Naive thymus-derived CD4-positive, alpha-beta T cell (primary cell): ENCODE measurements at regions of chr22 and their contacts with region 1.

Region 1: DNA sequence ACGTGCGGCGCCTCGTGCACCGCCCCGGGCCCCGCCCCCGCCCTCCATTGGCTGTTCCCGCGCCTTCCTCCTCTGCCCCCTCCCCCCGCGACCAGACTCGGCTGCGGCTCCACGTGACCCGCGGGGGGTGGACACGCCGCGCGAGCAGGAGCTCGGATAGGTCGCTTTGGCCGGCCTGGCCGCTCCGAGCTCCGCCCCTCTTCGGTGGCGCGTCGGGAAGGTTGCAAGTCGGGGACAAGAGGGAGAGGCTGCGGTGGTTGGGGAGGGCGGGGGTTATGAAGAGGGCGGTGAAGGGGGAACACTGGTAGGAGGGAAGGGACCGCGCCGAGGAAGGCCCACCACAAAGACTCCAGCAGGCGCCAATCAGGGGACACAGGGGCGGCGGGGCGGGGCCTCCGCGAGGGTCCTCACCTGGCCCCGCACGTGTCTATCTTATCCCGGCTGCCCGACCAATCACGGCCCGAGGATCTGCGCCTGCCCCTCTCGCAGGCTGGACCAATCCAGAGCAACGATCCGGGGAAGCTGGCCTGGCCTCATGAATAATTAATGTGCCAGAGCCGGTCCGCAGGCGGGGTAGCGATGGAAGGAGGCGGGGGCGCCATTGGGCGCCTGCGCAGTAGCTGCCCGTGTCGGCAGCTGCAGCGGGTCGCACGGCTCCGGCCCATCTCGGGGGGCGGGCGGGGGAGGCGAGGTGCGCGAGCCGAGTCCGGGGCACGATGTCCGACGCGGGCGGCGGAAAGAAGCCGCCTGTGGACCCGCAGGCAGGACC is at the start of gene TEF:
- DNase-seq: peak; percentile 97 to 99 (median 98)
- ATAC-seq: peak; percentile 89
- H3K4me3 ChIP-seq: peak within 1 kb of the TSS; percentile 86
- H3K4me3 Mint-ChIP-seq: peak within 1 kb of the TSS; percentile 90 to 97 (median 94)
- H3K27ac ChIP-seq: peak within 1 kb of the TSS; percentile 95
- H3K27ac Mint-ChIP-seq: peak within 1 kb of the TSS; percentile 94 to 99 (median 98)
- H3K4me1 ChIP-seq: peaks cover 5 to 14% of the 10 kb centered on the region in 2 donors
- H3K4me1 Mint-ChIP-seq: peaks cover 5 to 29% (median 19%) of the 10 kb centered on the region in 7 donors
- H3K27me3 ChIP-seq: no peaks in the 10 kb centered on the region
- H3K27me3 Mint-ChIP-seq: peaks cover 0 to 5% (median 0%) of the 10 kb centered on the region in 5 donors
- total RNA-seq, gene TEF: 3.8 to 8.4 (median 6.2) TPM

Region 2: DNA sequence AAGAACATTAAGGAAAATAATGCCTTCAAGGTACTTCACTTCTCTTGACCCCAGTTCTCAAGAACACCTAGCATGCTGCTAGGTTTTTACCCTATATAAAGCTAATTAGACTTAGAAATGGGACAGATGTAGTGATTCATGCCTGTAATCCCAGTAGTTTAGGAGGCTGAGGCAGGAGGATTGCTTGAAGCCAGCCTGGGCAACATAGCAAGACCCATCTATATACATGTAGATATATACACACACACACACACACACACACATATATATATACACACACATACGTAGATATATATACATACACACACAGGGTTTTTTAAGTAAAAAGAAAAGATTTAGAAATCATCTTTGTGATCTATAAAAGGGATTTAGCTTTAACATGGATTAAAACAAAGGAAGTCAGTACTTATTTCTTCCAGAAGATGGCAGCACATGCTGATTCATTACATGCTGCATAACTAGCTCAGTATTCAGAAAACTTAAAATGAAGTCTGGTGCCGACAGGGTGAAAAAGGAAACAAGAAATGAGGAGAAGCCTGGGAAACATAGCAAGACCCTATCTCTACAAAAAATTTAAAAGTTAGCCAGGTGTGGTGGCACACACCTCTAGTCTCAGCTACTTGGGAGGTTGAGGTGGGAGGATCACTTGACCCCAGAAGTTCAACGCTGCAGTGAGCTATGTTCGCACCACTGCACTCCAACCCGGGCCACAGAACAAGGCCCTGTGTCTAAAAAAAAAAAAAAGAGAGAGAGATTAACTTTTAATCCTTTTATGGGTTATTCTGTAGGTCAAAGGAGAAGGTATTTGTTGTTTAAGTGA is 458.8 kb before region 1 on chr22:
- CTCF ChIA-PET with region 1: no interaction called
- POLR2A ChIA-PET with region 1: no interaction called
- intact Hi-C with region 1: no loop called
- DNase-seq: peak in 7 of 9 donors; percentile 51 to 73 (median 67)
- ATAC-seq: peak; percentile 92
- H3K4me3 ChIP-seq: no peak overlapping the region
- H3K4me3 Mint-ChIP-seq: peak overlapping the region in 9 of 10 donors; percentile 1 to 79 (median 37)
- H3K27ac ChIP-seq: peak overlapping the region; percentile 2
- H3K27ac Mint-ChIP-seq: peak overlapping the region in 7 of 9 donors; percentile 47 to 88 (median 68)
- H3K4me1 ChIP-seq: peaks cover 0 to 4% of the 10 kb centered on the region in 2 donors
- H3K4me1 Mint-ChIP-seq: peaks cover 3 to 10% (median 5%) of the 10 kb centered on the region in 7 donors
- H3K27me3 ChIP-seq: no peaks in the 10 kb centered on the region
- H3K27me3 Mint-ChIP-seq: no peaks in the 10 kb centered on the region

Region 3: GRCh38 chr22:41204992-41205900 is 176.3 kb before region 1 on chr22 and contains the start of gene L3MBTL2:
- CTCF ChIA-PET with region 1: no interaction called
- POLR2A ChIA-PET with region 1: no interaction called
- intact Hi-C with region 1: loop called (anchors 1 kb)
- DNase-seq: peak; percentile 89 to 99 (median 97)
- ATAC-seq: peak; percentile 100
- H3K4me3 ChIP-seq: peak within 1 kb of the TSS; percentile 94
- H3K4me3 Mint-ChIP-seq: peak within 1 kb of the TSS; percentile 87 to 100 (median 96)
- H3K27ac ChIP-seq: peak within 1 kb of the TSS; percentile 85
- H3K27ac Mint-ChIP-seq: peak within 1 kb of the TSS; percentile 88 to 98 (median 92)
- H3K4me1 ChIP-seq: peaks cover 4 to 10% of the 10 kb centered on the region in 2 donors
- H3K4me1 Mint-ChIP-seq: peaks cover 10 to 40% (median 36%) of the 10 kb centered on the region in 7 donors
- H3K27me3 ChIP-seq: no peaks in the 10 kb centered on the region
- H3K27me3 Mint-ChIP-seq: peaks cover 0 to 26% (median 0%) of the 10 kb centered on the region in 5 donors
- total RNA-seq, gene L3MBTL2: 31.6 to 45.9 (median 43.3) TPM

Region 4: GRCh38 chr22:41403532-41404318 is 22.2 kb after region 1 on chr22:
- CTCF ChIA-PET with region 1: interaction called, 15 read pairs
- POLR2A ChIA-PET with region 1: interaction called, 6 read pairs
- intact Hi-C with region 1: loop called in 1 of 2 experiments (anchors 2 kb)
- DNase-seq: peak; percentile 60 to 83 (median 79)
- ATAC-seq: peak; percentile 100
- H3K4me3 ChIP-seq: no peak overlapping the region
- H3K4me3 Mint-ChIP-seq: peak overlapping the region in 2 of 10 donors; percentile 4 to 65
- H3K27ac ChIP-seq: peak overlapping the region; percentile 26
- H3K27ac Mint-ChIP-seq: peak overlapping the region in 5 of 9 donors; percentile 3 to 76 (median 6)
- H3K4me1 ChIP-seq: peaks cover 0 to 7% of the 10 kb centered on the region in 2 donors
- H3K4me1 Mint-ChIP-seq: peaks cover 2 to 11% (median 4%) of the 10 kb centered on the region in 7 donors
- H3K27me3 ChIP-seq: no peaks in the 10 kb centered on the region
- H3K27me3 Mint-ChIP-seq: no peaks in the 10 kb centered on the region

Region 5: GRCh38 chr22:41526837-41527799 is 145.6 kb after region 1 on chr22:
- CTCF ChIA-PET with region 1: no interaction called
- POLR2A ChIA-PET with region 1: interaction called, 5 read pairs
- intact Hi-C with region 1: loop called in 1 of 2 experiments (anchors 1 kb)
- DNase-seq: peak; percentile 36 to 75 (median 64)
- ATAC-seq: peak; percentile 78
- H3K4me3 ChIP-seq: no peak overlapping the region
- H3K4me3 Mint-ChIP-seq: no peak overlapping the region
- H3K27ac ChIP-seq: peak overlapping the region; percentile 48
- H3K27ac Mint-ChIP-seq: peak overlapping the region in 7 of 9 donors; percentile 40 to 84 (median 77)
- H3K4me1 ChIP-seq: peaks cover 10 to 16% of the 10 kb centered on the region in 2 donors
- H3K4me1 Mint-ChIP-seq: peaks cover 0 to 25% (median 20%) of the 10 kb centered on the region in 7 donors
- H3K27me3 ChIP-seq: no peaks in the 10 kb centered on the region
- H3K27me3 Mint-ChIP-seq: no peaks in the 10 kb centered on the region

Region 6: DNA sequence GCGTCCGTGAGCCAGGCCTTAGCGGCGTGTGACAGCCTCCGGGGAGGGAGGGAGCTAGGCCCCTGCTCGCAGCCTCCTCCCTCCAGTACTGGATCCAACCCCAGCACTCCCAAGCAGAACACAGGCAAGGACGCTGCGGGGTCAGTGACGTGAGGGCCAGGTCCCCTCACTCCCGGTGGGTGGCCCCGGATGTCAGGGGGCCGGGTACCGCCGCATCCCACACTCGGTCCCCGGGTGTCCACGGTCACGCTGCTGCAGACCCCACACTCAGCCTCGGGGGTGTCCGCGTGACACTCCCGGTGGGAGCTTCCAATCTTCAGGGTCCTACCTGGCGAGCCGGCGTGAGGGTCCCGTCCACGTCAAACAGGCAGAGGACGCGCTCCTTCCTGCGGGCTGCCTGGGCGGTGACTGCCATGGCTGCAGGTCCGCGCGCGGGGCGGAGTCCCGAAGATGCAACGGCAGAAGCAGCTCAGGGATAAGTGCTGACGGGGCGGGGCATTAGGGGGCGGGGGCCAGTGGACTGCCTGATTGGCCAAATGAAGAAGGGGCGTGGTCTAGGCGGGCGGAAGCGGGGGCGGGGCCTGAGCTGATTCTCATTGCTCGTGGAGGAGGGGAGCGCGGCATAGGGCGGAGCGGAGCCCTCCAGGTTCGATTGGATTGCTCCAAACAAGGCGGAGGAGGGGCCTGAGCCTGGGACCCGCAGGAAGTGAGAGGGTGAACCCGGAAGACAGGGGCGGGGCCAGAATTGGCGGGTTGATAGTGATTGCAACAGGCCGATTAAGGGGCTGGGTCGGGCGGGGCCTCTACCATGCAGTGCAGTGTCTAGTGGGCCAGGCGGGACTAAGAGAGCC is 208.1 kb after region 1 on chr22 and contains the start of gene PMM1:
- CTCF ChIA-PET with region 1: no interaction called
- POLR2A ChIA-PET with region 1: interaction called, 5 read pairs
- intact Hi-C with region 1: loop called (anchors 1 kb)
- DNase-seq: peak; percentile 97 to 100 (median 100)
- ATAC-seq: peak; percentile 99
- H3K4me3 ChIP-seq: peak within 1 kb of the TSS; percentile 97
- H3K4me3 Mint-ChIP-seq: peak within 1 kb of the TSS; percentile 76 to 96 (median 93)
- H3K27ac ChIP-seq: peak within 1 kb of the TSS; percentile 79
- H3K27ac Mint-ChIP-seq: peak within 1 kb of the TSS; percentile 81 to 93 (median 86)
- H3K4me1 ChIP-seq: peaks cover 9 to 11% of the 10 kb centered on the region in 2 donors
- H3K4me1 Mint-ChIP-seq: peaks cover 5 to 28% (median 22%) of the 10 kb centered on the region in 7 donors
- H3K27me3 ChIP-seq: no peaks in the 10 kb centered on the region
- H3K27me3 Mint-ChIP-seq: no peaks in the 10 kb centered on the region
- total RNA-seq, gene PMM1: 22.5 to 34.3 (median 26.9) TPM

Region 7: GRCh38 chr22:43014869-43015676 is 1633.6 kb after region 1 on chr22 and contains the start of gene PACSIN2:
- CTCF ChIA-PET with region 1: no interaction called
- POLR2A ChIA-PET with region 1: no interaction called
- intact Hi-C with region 1: loop called in 1 of 2 experiments (anchors 10 kb)
- DNase-seq: peak; percentile 95 to 99 (median 97)
- ATAC-seq: peak; percentile 99
- H3K4me3 ChIP-seq: peak within 1 kb of the TSS; percentile 91
- H3K4me3 Mint-ChIP-seq: peak within 1 kb of the TSS; percentile 93 to 99 (median 98)
- H3K27ac ChIP-seq: peak within 1 kb of the TSS; percentile 83
- H3K27ac Mint-ChIP-seq: peak within 1 kb of the TSS; percentile 87 to 98 (median 95)
- H3K4me1 ChIP-seq: peaks cover 9 to 17% of the 10 kb centered on the region in 2 donors
- H3K4me1 Mint-ChIP-seq: peaks cover 18 to 56% (median 42%) of the 10 kb centered on the region in 7 donors
- H3K27me3 ChIP-seq: no peaks in the 10 kb centered on the region
- H3K27me3 Mint-ChIP-seq: peaks cover 0 to 5% (median 0%) of the 10 kb centered on the region in 5 donors
- total RNA-seq, gene PACSIN2: 27.6 to 62.5 (median 38.1) TPM